Left cardiac atrium (tissue), 4 donors: ENCODE measurements at regions of chr15 and their contacts with region 1.

Region 1: DNA sequence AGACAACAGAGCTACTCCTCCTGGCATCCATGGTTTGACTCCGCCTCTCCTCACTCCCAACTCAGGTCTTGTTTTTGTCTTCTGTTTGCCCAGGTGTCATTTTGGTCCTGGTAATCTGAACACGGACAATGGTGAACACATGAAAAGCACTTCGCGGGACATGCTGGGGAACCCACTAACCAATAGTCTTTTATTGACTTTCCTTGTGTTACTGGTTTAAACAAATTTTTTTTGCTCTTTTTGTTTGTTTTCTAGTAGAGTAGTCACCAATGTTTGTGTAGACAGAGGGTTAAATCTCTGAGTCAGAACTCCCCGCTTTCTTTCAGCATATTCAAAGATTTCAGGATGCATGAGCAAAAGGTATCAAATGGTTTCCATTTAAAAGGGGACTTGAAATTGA is 38.3 kb downstream of the LARP6 start:
- DNase-seq: no peak
- ATAC-seq: no peak

Region 2: GRCh38 chr15:70679919-70680231 is 135.8 kb before region 1 on chr15:
- intact Hi-C with region 1: loop called (anchors 2 to 10 kb)
- DNase-seq: no peak
- ATAC-seq: no peak